Right cardiac atrium (tissue), 5 donors: ENCODE measurements at regions of chr1 and their contacts with region 1.

Region 1: DNA sequence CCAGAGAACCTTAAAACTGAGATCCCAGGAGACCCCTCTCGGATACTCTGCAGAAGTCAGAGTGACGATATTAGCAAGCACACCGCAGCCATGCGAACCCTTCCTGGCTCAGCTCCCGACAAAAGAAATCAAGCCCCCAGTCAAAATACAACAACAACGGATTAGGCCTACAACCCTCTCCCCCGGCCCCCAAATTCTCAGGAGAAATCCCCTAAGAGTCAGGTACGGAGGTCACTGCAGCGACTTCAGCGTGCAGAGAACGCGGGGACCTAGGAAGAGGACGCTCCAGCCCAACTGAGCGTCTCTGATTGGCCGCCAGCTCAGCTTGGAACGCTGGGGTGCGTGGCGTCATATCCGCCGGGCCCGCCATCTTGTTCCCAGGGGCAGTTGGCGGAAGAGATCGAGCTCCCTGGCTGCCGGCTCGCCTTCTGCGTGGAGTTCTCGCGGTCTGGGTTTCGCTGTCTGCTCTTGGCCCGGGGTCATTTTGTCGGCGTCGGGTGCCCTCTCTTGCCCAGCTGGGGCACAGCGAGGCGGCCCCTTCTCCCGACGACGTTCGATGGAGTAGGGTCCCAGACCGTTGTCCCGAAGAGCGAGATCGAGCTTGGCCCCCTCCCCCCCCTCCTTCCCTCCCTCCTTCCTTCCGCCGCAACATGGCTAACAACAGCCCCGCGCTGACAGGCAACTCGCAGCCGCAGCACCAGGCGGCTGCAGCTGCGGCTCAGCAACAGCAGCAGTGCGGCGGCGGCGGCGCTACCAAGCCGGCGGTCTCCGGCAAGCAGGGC is at the start of gene PRPF38B:
- DNase-seq: peak; percentile 95 to 98 (median 98)
- ATAC-seq: peak; percentile 98 to 99
- H3K4me3 ChIP-seq: peak within 1 kb of the TSS; percentile 75
- H3K27ac ChIP-seq: peak within 1 kb of the TSS; percentile 97
- H3K4me1 ChIP-seq: no peaks in the 10 kb centered on the region
- H3K27me3 ChIP-seq: no peaks in the 10 kb centered on the region
- total RNA-seq, gene PRPF38B: 18.3 to 25.1 (median 24.3) TPM

Region 2: GRCh38 chr1:108533351-108534083 is 158.6 kb before region 1 on chr1:
- intact Hi-C with region 1: no loop called
- DNase-seq: no peak
- ATAC-seq: no peak
- H3K4me3 ChIP-seq: no peak overlapping the region
- H3K27ac ChIP-seq: no peak overlapping the region
- H3K4me1 ChIP-seq: peaks cover 1% of the 10 kb centered on the region
- H3K27me3 ChIP-seq: no peaks in the 10 kb centered on the region

Region 3: DNA sequence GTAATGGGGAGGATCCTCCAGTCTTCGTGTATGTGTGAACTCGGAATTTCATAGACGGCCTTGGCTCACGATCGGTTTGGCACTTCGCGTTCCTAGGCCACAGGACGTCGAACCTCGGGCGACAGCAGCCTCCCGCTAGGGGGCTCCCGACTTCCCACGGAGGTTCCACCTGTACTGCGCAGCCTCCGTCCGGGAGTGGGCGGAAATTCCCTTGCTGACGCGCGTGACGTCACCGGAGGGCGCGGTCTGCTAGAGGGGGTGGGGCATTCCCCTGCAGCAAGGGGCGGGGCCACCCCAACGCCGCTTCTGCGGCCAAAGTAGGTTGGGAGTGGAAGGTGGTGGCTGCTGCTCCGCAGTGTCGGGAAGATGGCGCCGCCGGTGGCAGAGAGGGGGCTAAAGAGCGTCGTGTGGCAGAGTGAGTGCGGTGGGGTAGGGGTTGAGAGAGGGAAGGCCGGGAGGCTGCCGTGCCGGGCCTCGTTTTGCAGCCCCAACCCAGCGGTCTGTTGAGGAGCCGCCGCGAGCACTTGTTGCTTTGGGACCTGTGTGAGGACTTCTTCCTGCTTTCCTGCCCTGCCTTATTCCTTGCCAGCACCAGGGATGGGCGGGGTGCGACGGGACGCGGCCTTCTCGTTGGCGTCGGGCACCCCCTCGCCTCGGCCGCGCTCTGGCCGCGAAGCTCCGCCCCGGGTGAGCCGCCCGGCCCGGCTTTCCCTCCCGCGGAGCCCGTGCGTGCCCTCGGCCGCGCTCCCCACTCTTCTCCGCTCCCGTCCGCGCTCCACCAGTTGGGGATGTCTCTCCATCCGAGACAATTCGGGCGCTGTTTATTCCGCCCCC is 54.5 kb after region 1 on chr1 and contains the start of gene STXBP3:
- intact Hi-C with region 1: loop called in 2 of 4 experiments (anchors 10 kb)
- DNase-seq: peak; percentile 99 to 100 (median 100)
- ATAC-seq: peak; percentile 96 to 97
- H3K4me3 ChIP-seq: peak within 1 kb of the TSS; percentile 75
- H3K27ac ChIP-seq: peak within 1 kb of the TSS; percentile 96
- H3K4me1 ChIP-seq: no peaks in the 10 kb centered on the region
- H3K27me3 ChIP-seq: no peaks in the 10 kb centered on the region
- total RNA-seq, gene STXBP3: 25.5 to 32.4 (median 29.3) TPM